ENCODE measurements at regions of chr15 and their contacts with region 1.

Region 1: GRCh38 chr15:67863442-67863987 is 23.7 kb upstream of the RNU6-1 start:
- DNase-seq: peak; percentile 84 to 88 (median 84)
- ATAC-seq: peak; percentile 99
- H3K4me3 ChIP-seq: peak overlapping the region; percentile 40
- H3K27ac ChIP-seq: peak overlapping the region; percentile 52; the same call in 1 of the 3 replicates
- H3K4me1 ChIP-seq: peaks cover 7 to 12% of the 10 kb centered on the region in 2 experiments; a peak in 4 of 5 replicates
- H3K27me3 ChIP-seq: no peaks in the 10 kb centered on the region
- CTCF ChIP-seq: peak; percentile 91 to 94 (median 94)
- EP300 ChIP-seq: 0 out of 2 replicates have a peak, but pooled peaks have one; percentile 9
- POLR2A ChIP-seq: no peak; the same call in 1 of the 2 replicates
- RAD21 ChIP-seq: peak; percentile 99

Region 2: DNA sequence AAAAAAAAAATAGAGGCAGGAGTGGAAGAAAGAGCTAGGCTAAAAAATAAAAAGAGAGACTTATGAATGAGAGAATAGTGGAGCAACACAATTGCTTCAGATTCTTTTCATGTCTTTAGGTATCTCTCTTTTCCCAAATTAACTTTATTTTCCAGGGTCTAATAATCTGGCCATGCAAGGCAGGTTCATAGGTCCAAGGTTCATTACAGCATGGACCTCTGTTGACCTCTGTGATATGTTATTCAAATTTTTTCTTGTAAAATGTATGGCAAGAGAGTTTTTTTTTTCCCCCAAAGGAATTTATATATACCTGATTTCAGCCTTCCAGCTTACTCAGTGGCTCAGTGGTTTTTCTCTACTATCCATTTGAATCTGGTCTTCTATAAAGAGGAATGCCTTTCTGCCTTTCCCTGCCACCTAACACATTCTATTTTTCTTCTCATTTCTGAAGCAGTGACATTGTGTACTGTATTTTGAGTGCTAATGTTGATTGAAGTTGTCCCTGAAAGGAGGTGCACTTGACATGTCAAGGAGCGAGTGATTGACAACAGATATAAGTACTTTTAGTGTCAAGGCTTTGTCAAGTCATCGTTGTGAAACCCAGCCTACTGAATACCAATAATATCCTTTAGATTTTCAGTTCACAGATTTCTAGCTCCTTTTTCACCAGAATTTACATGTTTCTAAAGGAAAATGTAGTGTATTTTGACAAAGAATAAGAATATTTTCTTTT is 202.5 kb before region 1 on chr15:
- CTCF ChIA-PET with region 1: no interaction called
- POLR2A ChIA-PET with region 1: no interaction called
- in situ Hi-C with region 1: no loop called
- intact Hi-C with region 1: no loop called
- DNase-seq: peak in 1 of 4 experiments; percentile 7
- ATAC-seq: no peak
- H3K4me3 ChIP-seq: no peak overlapping the region
- H3K27ac ChIP-seq: no peak overlapping the region
- H3K4me1 ChIP-seq: no peaks in the 10 kb centered on the region; a peak in 1 of 5 replicates
- H3K27me3 ChIP-seq: no peaks in the 10 kb centered on the region
- CTCF ChIP-seq: no peak
- EP300 ChIP-seq: no peak
- POLR2A ChIP-seq: no peak
- RAD21 ChIP-seq: no peak

Region 3: GRCh38 chr15:67937153-67937761 is 73.7 kb after region 1 on chr15:
- CTCF ChIA-PET with region 1: interaction called, 5 read pairs
- POLR2A ChIA-PET with region 1: no interaction called
- in situ Hi-C with region 1: no loop called
- intact Hi-C with region 1: loop called (anchors 5 kb)
- DNase-seq: peak in 1 of 4 experiments; percentile 38
- ATAC-seq: peak; percentile 53; the same call in 2 of the 3 replicates
- H3K4me3 ChIP-seq: no peak overlapping the region
- H3K27ac ChIP-seq: no peak overlapping the region
- H3K4me1 ChIP-seq: no peaks in the 10 kb centered on the region; a peak in 3 of 5 replicates
- H3K27me3 ChIP-seq: no peaks in the 10 kb centered on the region
- CTCF ChIP-seq: no peak
- EP300 ChIP-seq: no peak
- POLR2A ChIP-seq: no peak
- RAD21 ChIP-seq: no peak

Region 4: GRCh38 chr15:68047826-68048225 is 184.3 kb after region 1 on chr15:
- CTCF ChIA-PET with region 1: interaction called, 4 read pairs
- POLR2A ChIA-PET with region 1: no interaction called
- in situ Hi-C with region 1: no loop called
- intact Hi-C with region 1: loop called (anchors 2 kb)
- DNase-seq: no peak
- ATAC-seq: no peak
- H3K4me3 ChIP-seq: no peak overlapping the region
- H3K27ac ChIP-seq: no peak overlapping the region
- H3K4me1 ChIP-seq: peaks cover 7 to 8% of the 10 kb centered on the region in 2 experiments; a peak in 2 of 5 replicates
- H3K27me3 ChIP-seq: no peaks in the 10 kb centered on the region
- CTCF ChIP-seq: no peak
- EP300 ChIP-seq: no peak
- POLR2A ChIP-seq: no peak
- RAD21 ChIP-seq: no peak

Region 5: DNA sequence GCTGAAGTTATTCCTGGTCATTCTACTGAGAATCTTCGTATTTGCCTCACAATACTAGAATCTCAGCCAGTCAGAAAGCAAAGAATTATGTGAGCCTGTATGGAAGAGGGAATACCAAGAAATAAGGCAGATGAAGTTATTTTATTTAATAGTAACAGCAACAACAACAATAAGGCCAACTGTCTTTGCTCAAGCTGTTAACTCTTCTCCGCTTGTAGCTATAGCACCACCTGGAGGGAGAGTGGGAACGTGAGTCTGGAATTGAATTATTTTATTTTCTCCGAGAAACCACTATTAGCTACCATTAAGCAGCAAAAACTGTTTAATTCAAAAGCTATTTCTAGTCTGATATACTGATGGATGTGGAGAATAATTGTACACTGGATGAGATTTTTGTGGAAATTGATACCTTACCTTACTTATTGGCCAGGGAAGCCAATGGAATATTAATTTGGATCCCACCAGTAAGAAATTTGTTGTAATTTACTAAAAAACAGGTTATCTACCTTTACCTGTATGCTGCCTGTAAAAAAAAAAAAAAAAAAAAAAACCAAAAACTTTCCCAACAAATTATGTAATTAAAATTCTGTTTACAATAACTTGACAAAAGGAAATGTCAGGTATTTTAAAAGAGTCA is 291.5 kb after region 1 on chr15:
- CTCF ChIA-PET with region 1: interaction called, 13 read pairs
- POLR2A ChIA-PET with region 1: no interaction called
- in situ Hi-C with region 1: loop called (anchors 5 kb)
- intact Hi-C with region 1: loop called (anchors 1 kb)
- DNase-seq: peak in 3 of 4 experiments; percentile 24 to 56 (median 26)
- ATAC-seq: peak; percentile 66; the same call in 2 of the 3 replicates
- H3K4me3 ChIP-seq: no peak overlapping the region
- H3K27ac ChIP-seq: no peak overlapping the region
- H3K4me1 ChIP-seq: no peaks in the 10 kb centered on the region
- H3K27me3 ChIP-seq: no peaks in the 10 kb centered on the region
- CTCF ChIP-seq: peak; percentile 56 to 79 (median 58)
- EP300 ChIP-seq: no peak
- POLR2A ChIP-seq: no peak
- RAD21 ChIP-seq: peak; percentile 84 to 85

Region 6: DNA sequence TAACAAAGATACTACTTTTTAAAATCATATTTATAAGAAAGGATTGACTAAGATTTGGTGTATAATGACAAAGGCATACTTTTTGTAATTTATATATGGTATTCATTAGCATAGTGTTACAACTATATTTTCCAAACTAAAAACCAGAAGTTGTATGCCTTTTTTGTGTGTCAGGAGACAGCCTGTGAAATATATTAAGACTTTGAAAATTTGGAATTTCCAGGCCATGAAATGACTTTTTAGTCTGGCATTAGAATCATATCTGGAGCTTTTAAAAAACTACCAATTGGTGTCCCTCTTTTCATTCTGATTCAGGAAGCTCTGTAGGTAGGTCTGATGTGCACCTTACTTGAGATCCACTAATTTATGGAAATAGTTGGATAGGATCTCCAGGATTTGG is 299.7 kb after region 1 on chr15:
- CTCF ChIA-PET with region 1: no interaction called
- POLR2A ChIA-PET with region 1: no interaction called
- in situ Hi-C with region 1: loop called (anchors 5 kb)
- intact Hi-C with region 1: no loop called
- DNase-seq: no peak
- ATAC-seq: no peak
- H3K4me3 ChIP-seq: no peak overlapping the region
- H3K27ac ChIP-seq: no peak overlapping the region
- H3K4me1 ChIP-seq: no peaks in the 10 kb centered on the region
- H3K27me3 ChIP-seq: no peaks in the 10 kb centered on the region
- CTCF ChIP-seq: no peak
- EP300 ChIP-seq: no peak
- POLR2A ChIP-seq: no peak
- RAD21 ChIP-seq: no peak

Region 7: DNA sequence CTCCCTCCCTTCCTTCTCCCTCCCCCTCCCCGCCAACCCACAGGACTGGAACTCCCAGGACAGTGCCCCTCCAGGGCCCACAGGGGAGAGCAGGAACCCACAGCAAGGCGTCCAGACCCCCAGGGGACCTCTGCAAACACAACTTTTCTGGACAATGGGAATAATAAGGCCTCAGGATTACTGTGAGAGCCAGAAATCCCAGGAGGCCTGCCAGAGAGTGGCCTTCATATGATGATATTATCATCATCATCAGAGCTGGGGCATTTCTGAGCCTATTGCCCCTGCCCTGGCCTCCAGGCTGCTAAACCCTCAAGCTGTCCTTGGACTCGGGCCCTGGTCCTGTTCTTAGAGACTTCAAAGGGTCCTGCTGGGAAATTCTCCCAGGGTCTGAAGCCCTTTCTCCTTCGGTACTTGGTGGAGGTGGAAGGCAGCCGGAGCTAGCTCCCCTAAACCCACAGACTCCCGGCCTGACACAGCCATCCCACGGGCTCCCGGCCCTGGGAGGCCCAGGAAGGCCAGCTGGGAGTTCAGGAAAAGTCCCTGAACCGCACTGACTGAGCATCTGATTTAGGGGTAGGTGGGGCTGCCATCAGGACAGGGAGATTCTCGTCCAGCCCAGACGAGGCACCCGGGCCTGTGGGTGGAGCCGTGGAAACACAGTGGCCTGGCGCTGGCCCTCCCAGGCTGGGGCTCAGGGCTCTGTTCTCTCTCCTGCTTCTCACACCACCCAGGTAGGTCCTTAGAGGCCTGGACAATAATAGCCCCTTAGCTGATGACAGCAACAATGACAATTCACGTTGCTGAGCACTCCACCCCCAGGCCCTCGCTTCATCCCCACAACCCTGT is 336.7 kb after region 1 on chr15:
- CTCF ChIA-PET with region 1: no interaction called
- POLR2A ChIA-PET with region 1: no interaction called
- in situ Hi-C with region 1: no loop called
- intact Hi-C with region 1: no loop called
- DNase-seq: no peak
- ATAC-seq: no peak
- H3K4me3 ChIP-seq: no peak overlapping the region
- H3K27ac ChIP-seq: no peak overlapping the region
- H3K4me1 ChIP-seq: peaks cover 0 to 23% of the 10 kb centered on the region in 2 experiments; a peak in 3 of 5 replicates
- H3K27me3 ChIP-seq: no peaks in the 10 kb centered on the region
- CTCF ChIP-seq: no peak
- EP300 ChIP-seq: no peak
- POLR2A ChIP-seq: no peak
- RAD21 ChIP-seq: no peak

Region 8: DNA sequence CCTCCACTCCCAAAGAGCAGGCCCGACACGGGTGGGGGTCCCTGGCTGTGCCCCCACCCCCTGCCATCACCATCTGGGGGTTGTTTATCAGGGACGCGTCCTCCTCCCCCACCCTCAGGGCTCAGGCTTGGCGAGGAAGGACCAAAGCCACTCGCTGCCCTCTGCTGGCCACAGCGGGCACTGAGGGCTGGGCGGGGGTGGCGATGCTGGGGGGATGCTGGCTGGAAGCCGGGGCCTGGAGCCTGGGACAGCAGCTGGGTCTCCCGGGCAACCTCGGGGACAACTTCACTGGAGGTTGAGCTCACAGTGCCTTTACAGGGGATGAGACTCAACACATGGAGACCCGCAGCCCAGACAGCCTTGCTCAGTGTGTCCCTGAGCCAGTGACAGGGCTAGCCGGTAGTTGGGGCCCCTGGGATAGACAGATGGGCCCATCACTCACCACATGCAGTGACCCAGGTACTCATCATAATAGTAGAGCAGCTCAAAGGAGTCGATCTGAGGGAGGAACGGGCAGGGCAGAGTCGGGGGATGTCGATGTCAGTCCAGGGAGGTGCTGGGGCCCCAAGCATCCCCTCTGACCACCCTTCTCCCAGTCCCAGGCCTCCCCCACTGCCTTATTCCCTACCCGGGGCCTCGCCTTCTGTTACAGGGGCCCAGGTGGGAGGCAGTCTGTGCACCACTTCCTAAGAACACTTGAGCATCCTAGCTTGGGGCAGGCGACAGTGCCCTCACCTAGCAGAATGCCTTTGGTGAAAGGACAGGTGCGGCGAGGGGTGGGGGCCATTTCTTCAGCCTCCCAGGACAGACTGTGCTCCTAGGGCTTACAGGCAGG is 347.5 kb after region 1 on chr15:
- CTCF ChIA-PET with region 1: interaction called, 4 read pairs
- POLR2A ChIA-PET with region 1: no interaction called
- in situ Hi-C with region 1: no loop called
- intact Hi-C with region 1: loop called (anchors 5 kb)
- DNase-seq: peak; percentile 61 to 68 (median 66)
- ATAC-seq: peak; percentile 81
- H3K4me3 ChIP-seq: no peak overlapping the region
- H3K27ac ChIP-seq: no peak overlapping the region
- H3K4me1 ChIP-seq: peaks cover 7 to 37% of the 10 kb centered on the region in 2 experiments
- H3K27me3 ChIP-seq: no peaks in the 10 kb centered on the region
- CTCF ChIP-seq: peak; percentile 65 to 78 (median 68)
- EP300 ChIP-seq: no peak
- POLR2A ChIP-seq: no peak
- RAD21 ChIP-seq: peak; percentile 41 to 60